ENCODE measurements at regions of chr11 and their contacts with region 1.

Region 1: DNA sequence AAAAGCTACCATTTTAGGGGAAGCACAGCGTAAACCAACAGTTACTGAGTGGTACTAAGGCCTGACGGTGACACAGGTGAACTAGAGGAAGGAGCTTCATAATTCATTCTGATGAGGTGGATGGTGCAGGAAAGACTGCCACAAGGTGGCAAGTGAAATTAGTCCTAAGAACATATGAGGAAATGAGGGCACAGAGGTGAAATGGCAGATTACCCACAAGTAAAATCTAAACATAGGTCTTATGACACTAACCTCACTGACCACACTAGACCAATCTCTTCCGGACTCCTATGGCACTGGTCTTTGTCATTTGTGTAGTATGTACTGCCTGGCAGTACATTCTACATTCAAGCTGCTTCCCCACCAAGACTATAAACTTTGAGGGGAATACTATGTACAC is 20.2 kb downstream of the GAB2 start:
- DNase-seq: no peak
- H3K4me3 ChIP-seq: no peak overlapping the region
- CTCF ChIP-seq: no peak
- POLR2A ChIP-seq: no peak

Region 2: GRCh38 chr11:77487790-77488189 is 909.6 kb before region 1 on chr11:
- intact Hi-C with region 1: loop called (anchors 10 kb)
- DNase-seq: no peak
- H3K4me3 ChIP-seq: no peak overlapping the region
- CTCF ChIP-seq: no peak
- POLR2A ChIP-seq: no peak

Region 3: DNA sequence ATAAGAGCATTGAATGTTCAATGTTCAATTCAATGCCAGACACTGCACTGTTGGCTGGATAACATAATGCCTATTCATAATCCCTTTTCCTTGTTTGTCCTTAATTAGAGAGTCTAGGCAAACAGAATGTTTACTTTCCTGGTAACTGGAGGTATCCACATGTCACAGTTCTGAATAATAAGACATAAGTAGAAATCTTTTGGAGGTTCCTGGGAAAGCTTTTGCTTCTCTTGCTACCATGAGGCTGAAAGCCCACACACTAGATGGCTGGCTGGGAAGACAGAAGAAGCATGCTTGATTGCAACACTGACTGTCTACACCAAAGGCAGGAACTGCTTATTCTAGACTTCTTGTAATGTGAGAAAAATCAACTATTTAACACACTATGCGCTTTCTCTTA is 59.2 kb before region 1 on chr11:
- intact Hi-C with region 1: no loop called
- DNase-seq: no peak
- H3K4me3 ChIP-seq: no peak overlapping the region
- CTCF ChIP-seq: no peak
- POLR2A ChIP-seq: no peak

Region 4: DNA sequence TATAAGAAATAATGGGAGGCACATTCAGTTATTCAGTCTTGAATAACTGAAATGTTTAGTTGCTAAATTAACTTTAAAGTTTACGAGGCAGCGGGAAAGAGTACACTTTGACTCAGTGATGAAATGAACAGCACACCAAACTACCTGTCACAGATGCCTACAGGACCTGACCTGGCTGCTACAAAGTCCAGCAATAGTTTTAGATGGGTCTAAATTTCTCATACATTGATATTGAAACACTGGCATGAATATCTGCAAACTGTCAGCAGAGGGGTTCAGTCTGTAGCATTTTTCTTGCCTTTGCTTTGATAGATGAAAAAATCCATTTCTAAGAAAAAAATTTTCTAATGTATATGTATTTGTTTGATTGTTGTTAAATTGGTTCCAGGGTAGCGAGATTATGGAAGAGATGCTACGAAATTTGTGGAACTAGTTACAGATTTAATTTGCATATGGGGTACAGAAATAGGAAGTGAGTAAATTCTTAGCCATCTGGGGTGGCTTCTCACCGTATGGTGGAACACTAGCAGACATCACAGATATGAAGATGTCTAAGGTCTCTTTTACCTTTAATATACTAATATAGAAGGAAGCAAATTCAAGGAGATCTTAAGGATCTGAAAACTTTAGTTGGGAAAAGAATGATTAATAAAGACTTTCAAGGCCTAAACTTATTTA is 41.0 kb after region 1 on chr11:
- intact Hi-C with region 1: no loop called
- DNase-seq: no peak
- H3K4me3 ChIP-seq: no peak overlapping the region
- CTCF ChIP-seq: no peak
- POLR2A ChIP-seq: no peak

Region 5: GRCh38 chr11:78449866-78450265 is 52.5 kb after region 1 on chr11:
- intact Hi-C with region 1: no loop called
- DNase-seq: no peak
- H3K4me3 ChIP-seq: no peak overlapping the region
- CTCF ChIP-seq: no peak
- POLR2A ChIP-seq: no peak

Measured in lower leg skin (tissue), 4 donors.